Mammary epithelial cell (primary cell): ENCODE measurements at regions of chr6 and their contacts with region 1.

Region 1: GRCh38 chr6:158213925-158214674 is 46.0 kb downstream of the GTF2H5 start:
- DNase-seq: peak; percentile 65
- H3K4me3 ChIP-seq: no peak overlapping the region
- H3K27ac ChIP-seq: no peak overlapping the region
- H3K4me1 ChIP-seq: peaks cover 14% of the 10 kb centered on the region
- H3K27me3 ChIP-seq: no peaks in the 10 kb centered on the region
- CTCF ChIP-seq: peak; percentile 77 to 91

Region 2: DNA sequence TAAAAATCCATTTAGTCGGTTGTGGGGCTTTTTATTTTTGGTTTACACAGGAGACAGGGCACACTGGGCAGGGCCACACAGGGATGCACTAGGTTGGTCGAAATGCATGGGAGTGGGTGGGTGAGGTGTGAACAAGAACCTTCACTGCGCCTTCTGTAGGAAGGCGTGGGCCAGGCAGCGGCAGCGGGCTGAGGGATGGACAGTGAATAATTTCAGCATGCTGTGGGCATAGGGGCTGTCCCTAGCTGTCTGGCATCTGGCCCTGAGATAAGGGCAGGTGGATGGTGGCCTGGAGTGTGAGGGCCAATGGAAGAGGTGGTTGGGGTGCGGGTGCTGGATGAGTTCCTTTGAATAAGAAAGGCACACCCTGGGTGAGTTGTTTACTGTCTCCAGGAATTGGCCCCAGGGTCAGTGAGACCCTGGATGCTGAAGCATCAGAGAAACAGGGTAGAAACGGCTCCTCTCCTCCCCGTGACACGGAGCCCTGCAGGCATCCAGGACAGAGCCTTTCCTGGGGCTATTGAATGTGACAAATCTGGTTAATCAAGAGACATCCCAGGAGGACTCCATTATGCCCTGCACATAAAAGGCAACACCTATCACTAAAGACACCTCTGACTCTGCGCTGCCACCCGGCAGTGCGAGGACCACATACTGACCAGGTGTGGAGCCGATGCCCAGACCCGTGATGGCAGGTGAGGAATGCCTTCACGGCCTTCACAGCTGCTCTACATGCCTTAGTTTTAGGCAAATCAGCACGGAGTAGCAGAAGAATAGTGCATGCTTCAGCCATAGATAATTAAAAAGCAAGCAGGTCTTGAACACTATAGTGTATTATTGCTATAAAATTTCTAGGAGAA is 514.1 kb before region 1 on chr6:
- CTCF ChIA-PET with region 1: no interaction called
- dilution Hi-C with region 1: no loop called
- in situ Hi-C with region 1: no loop called
- intact Hi-C with region 1: no loop called
- DNase-seq: no peak
- H3K4me3 ChIP-seq: no peak overlapping the region
- H3K27ac ChIP-seq: no peak overlapping the region
- H3K4me1 ChIP-seq: no peaks in the 10 kb centered on the region
- H3K27me3 ChIP-seq: no peaks in the 10 kb centered on the region
- CTCF ChIP-seq: no peak

Region 3: DNA sequence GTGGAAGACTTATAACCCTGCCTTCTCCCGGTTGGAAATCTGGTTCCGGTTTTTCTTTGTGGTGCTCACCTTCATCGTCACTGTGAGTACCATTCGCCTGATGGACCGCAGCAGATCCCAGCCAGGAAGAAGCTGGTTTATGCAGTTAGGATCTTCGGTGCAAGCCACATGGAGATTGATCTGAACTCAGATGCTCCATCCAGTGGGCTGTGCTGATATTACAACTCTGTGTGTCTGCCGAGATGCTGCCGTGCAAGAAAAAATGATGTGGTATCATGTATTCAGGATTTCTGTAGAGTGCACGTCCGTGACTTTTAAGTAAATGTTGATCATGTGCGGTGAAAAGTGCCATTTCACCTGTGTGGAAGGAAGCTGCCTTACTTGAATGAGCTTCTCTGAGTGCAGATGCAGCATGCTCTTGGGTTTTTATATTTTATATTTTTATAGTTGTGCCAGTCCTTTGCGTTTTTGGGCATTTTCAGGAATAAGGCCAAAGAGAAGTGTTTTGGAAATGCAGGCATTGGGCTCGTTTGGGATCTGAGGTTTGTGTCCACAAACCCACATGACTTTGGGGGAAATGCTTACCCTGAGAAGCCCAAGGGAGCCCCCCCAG is 391.3 kb after region 1 on chr6:
- CTCF ChIA-PET with region 1: interaction called, 4 read pairs
- dilution Hi-C with region 1: no loop called
- in situ Hi-C with region 1: no loop called
- intact Hi-C with region 1: loop called (anchors 1 kb)
- DNase-seq: peak; percentile 53
- H3K4me3 ChIP-seq: no peak overlapping the region
- H3K27ac ChIP-seq: no peak overlapping the region
- H3K4me1 ChIP-seq: no peaks in the 10 kb centered on the region
- H3K27me3 ChIP-seq: no peaks in the 10 kb centered on the region
- CTCF ChIP-seq: peak; percentile 78

Region 4: GRCh38 chr6:158686791-158687381 is 472.8 kb after region 1 on chr6:
- CTCF ChIA-PET with region 1: interaction called, 13 read pairs
- dilution Hi-C with region 1: no loop called
- in situ Hi-C with region 1: loop called (anchors 10 to 25 kb)
- intact Hi-C with region 1: loop called (anchors 1 kb)
- DNase-seq: no peak
- H3K4me3 ChIP-seq: no peak overlapping the region
- H3K27ac ChIP-seq: no peak overlapping the region
- H3K4me1 ChIP-seq: no peaks in the 10 kb centered on the region
- H3K27me3 ChIP-seq: no peaks in the 10 kb centered on the region
- CTCF ChIP-seq: no peak

Region 5: DNA sequence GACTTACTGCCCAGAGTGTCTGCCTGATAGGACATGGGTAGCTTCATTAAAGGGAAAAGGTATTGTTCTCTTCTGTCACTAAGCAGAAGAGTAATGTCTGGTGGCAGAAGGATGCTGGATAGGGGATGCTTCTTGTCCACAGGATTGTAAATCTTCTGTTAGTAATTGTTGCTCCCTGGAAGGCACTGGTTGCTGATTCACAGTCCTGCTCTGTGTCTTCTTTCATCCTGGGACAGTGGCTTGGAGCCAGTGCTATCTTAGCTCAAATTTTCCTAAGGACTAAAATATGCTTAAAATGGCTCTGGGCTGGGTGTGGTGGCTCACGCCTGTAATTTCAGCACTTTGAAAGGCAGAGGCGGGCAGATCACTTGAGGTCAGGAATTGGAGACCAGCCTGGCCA is 483.7 kb after region 1 on chr6:
- CTCF ChIA-PET with region 1: no interaction called
- dilution Hi-C with region 1: no loop called
- in situ Hi-C with region 1: loop called (anchors 10 to 25 kb)
- intact Hi-C with region 1: no loop called
- DNase-seq: no peak
- H3K4me3 ChIP-seq: no peak overlapping the region
- H3K27ac ChIP-seq: no peak overlapping the region
- H3K4me1 ChIP-seq: no peaks in the 10 kb centered on the region
- H3K27me3 ChIP-seq: no peaks in the 10 kb centered on the region
- CTCF ChIP-seq: no peak

Region 6: GRCh38 chr6:158793432-158793831 is 579.3 kb after region 1 on chr6:
- CTCF ChIA-PET with region 1: no interaction called
- dilution Hi-C with region 1: no loop called
- in situ Hi-C with region 1: no loop called
- intact Hi-C with region 1: loop called (anchors 10 kb)
- DNase-seq: no peak
- H3K4me3 ChIP-seq: no peak overlapping the region
- H3K27ac ChIP-seq: no peak overlapping the region
- H3K4me1 ChIP-seq: peaks cover 19% of the 10 kb centered on the region
- H3K27me3 ChIP-seq: no peaks in the 10 kb centered on the region
- CTCF ChIP-seq: peak; percentile 51 to 61

Region 7: DNA sequence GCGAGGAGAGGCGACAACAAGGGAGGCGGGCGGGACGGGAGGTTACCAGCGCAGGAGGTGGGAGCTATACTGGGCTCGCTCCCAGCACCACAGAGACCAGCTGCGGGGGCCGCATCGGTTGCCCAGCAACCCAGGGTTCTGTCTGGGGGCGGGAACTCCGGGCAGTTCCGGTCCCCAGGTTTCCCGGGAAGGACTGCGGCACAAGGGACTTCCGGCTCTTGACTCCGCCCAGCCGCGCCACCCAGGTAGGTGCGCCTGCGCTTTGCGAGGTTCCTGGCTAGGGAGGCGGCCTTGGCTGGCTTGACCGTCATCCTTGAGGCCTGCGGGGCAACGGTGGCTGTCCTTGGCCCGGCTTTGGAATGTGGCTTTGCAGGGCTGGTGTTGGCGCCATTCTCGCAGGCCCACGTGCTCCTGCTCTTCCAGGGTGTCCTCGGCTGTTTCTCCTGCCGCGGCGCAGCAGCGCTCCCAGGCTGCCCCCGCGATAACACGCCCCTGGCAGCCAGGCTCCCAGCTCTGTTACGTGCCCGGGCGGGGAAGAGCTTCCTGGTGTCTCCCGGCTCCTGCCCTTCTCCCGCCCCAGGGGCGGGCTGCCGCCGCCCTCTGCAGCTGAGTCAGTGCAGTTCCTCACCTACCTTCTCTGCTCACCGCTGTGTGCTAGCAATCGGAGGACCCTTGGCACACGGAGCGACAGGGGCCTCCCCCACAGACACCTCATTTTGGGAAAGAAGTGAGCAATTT is 785.7 kb after region 1 on chr6 and contains the start of gene RSPH3:
- CTCF ChIA-PET with region 1: no interaction called
- dilution Hi-C with region 1: no loop called
- in situ Hi-C with region 1: loop called in 1 of 2 experiments (anchors 25 kb)
- intact Hi-C with region 1: no loop called
- DNase-seq: peak; percentile 97
- H3K4me3 ChIP-seq: peak within 1 kb of the TSS; percentile 42 to 94 (median 65)
- H3K27ac ChIP-seq: peak within 1 kb of the TSS; percentile 69
- H3K4me1 ChIP-seq: peaks cover 19% of the 10 kb centered on the region
- H3K27me3 ChIP-seq: no peaks in the 10 kb centered on the region
- CTCF ChIP-seq: peak in 1 of 2 donors; percentile 37
- total RNA-seq, gene RSPH3: 12.2 to 15.6 TPM